ENCODE measurements at regions of chr17 and their contacts with region 1.

Region 1: GRCh38 chr17:75712446-75712845 is 8.8 kb upstream of the ITGB4 start:
- DNase-seq: no peak
- H3K27ac ChIP-seq: no peak overlapping the region
- CTCF ChIP-seq: no peak

Region 2: GRCh38 chr17:75679706-75680442 is 32.6 kb before region 1 on chr17:
- CTCF ChIA-PET with region 1: interaction called, 10 read pairs
- POLR2A ChIA-PET with region 1: interaction called, 4 read pairs
- DNase-seq: peak; percentile 49
- H3K27ac ChIP-seq: peak overlapping the region; percentile 100
- CTCF ChIP-seq: no peak; the same call in 1 of the 2 replicates

Region 3: DNA sequence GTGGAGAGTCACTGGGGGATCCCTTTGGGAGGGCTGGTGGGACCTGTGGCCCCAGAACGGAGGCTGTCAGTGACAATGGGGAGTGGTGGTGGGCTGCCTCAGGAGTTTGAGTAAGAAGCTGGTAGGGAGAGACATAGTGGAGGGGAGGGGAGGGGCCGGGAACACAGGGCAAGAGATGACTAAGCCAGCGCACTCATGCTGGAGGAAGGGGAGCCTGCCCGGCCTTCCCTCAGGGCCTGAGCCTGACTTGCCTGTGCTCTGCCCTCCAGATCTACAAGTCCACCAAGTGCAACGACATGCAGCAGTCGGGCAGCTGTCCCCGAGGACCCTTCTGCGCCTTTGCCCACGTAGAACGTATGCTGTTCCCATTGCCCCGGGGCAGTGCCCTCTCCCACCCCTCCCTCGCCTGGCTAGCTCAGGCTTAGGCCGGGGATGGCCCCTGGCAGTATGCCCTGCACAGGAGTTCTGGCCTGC is 102.5 kb after region 1 on chr17:
- CTCF ChIA-PET with region 1: no interaction called
- POLR2A ChIA-PET with region 1: no interaction called
- DNase-seq: peak; percentile 86
- H3K27ac ChIP-seq: peak overlapping the region; percentile 94
- CTCF ChIP-seq: no peak

Measured in RWPE1 (cell line).